Heart right ventricle (tissue), 16 donors: ENCODE measurements at regions of chr15 and their contacts with region 1.

Region 1: DNA sequence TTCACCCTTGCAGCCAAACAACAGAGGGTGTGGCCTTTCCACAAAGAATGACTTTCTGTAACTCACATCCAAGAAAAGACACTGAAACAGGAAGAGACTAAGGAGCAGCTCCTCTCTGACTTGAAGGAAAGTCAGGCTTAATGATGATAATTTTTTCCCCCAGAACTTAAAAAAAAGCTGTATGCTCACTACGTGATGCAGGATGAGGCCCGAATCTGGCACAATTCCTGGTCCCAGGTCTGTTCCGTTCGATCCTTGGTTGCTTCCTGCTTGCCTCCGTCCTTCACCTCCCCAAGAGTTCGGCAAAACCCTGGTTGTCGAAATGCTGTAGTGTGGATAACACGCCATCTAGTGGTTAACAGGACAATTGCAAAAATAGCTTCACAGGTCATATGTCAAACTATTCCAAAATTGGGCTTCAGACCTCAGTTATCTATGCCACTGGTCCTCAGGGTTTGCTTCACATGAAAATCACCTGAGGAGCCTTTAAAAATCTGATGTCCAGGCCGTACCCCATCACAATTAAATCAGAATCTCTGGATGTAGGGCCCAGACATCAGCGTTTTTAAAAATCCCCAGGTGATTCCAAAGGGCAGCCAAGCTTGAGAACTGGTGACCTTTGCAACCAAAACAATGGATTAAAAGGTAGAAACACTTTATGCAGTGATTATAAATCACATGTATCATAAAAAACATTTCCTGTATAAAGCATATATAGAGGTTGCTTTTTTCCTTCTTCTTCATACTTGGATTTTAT is 28.1 kb upstream of the SYNM start:
- DNase-seq: peak in 1 of 2 donors; percentile 73
- ATAC-seq: peak; percentile 84 to 91 (median 87)
- H3K4me3 ChIP-seq: peak overlapping the region in 8 of 10 donors; percentile 11 to 50 (median 44)
- H3K27ac ChIP-seq: peak overlapping the region in 1 of 10 donors; percentile 66
- H3K4me1 ChIP-seq: peaks cover 0 to 9% (median 0%) of the 10 kb centered on the region in 9 donors
- H3K27me3 ChIP-seq: peaks cover 0 to 3% (median 0%) of the 10 kb centered on the region in 7 donors
- CTCF ChIP-seq: peak; percentile 78 to 92 (median 91)

Region 2: DNA sequence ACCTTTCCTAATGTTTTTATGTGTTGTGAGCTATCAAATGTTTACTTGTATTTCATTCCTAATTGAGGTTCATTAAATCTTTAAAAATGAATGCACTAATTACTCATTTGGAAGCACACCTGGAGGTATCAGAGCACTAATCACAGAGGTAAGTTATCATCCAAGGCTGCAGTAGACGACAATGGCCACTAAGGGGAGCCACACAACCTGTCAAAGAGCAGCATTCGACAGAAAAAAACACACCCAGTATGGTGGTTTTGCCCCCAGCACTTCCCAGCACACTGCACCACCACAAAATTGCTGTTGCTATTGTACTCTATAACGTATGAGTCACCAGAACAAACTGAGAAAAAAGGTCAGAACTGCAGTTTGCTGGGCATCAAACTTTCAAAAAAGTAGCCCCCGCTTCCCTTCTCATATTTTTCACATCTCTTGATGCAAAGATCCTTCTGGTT is 634.3 kb before region 1 on chr15:
- intact Hi-C with region 1: loop called in 8 of 10 experiments (anchors 2 to 10 kb)
- DNase-seq: no peak
- ATAC-seq: peak in 1 of 8 donors; percentile 70
- H3K4me3 ChIP-seq: no peak overlapping the region
- H3K27ac ChIP-seq: no peak overlapping the region
- H3K4me1 ChIP-seq: no peaks in the 10 kb centered on the region
- H3K27me3 ChIP-seq: peaks cover 0 to 39% (median 13%) of the 10 kb centered on the region in 7 donors
- CTCF ChIP-seq: peak; percentile 51 to 77 (median 72)

Region 3: GRCh38 chr15:98518823-98519561 is 557.7 kb before region 1 on chr15:
- intact Hi-C with region 1: loop called (anchors 1 to 5 kb)
- DNase-seq: peak in 1 of 2 donors; percentile 59
- ATAC-seq: peak; percentile 77 to 88 (median 82)
- H3K4me3 ChIP-seq: no peak overlapping the region
- H3K27ac ChIP-seq: no peak overlapping the region
- H3K4me1 ChIP-seq: peaks cover 0 to 6% (median 0%) of the 10 kb centered on the region in 9 donors
- H3K27me3 ChIP-seq: peaks cover 0 to 11% (median 0%) of the 10 kb centered on the region in 7 donors
- CTCF ChIP-seq: peak; percentile 76 to 89 (median 79)

Region 4: GRCh38 chr15:98525661-98526001 is 551.1 kb before region 1 on chr15:
- intact Hi-C with region 1: loop called in 1 of 10 experiments (anchors 5 kb)
- DNase-seq: no peak
- ATAC-seq: peak in 1 of 8 donors; percentile 41
- H3K4me3 ChIP-seq: no peak overlapping the region
- H3K27ac ChIP-seq: peak overlapping the region in 1 of 10 donors; percentile 15
- H3K4me1 ChIP-seq: no peaks in the 10 kb centered on the region
- H3K27me3 ChIP-seq: peaks cover 0 to 24% (median 10%) of the 10 kb centered on the region in 7 donors
- CTCF ChIP-seq: no peak

Region 5: GRCh38 chr15:98668566-98669308 is 408.0 kb before region 1 on chr15:
- intact Hi-C with region 1: loop called in 1 of 10 experiments (anchors 10 kb)
- DNase-seq: no peak
- ATAC-seq: peak in 5 of 8 donors; percentile 12 to 31 (median 21)
- H3K4me3 ChIP-seq: no peak overlapping the region
- H3K27ac ChIP-seq: peak overlapping the region in 8 of 10 donors; percentile 21 to 87 (median 72)
- H3K4me1 ChIP-seq: peaks cover 16 to 98% (median 77%) of the 10 kb centered on the region in 9 donors
- H3K27me3 ChIP-seq: no peaks in the 10 kb centered on the region
- CTCF ChIP-seq: no peak

Region 6: GRCh38 chr15:98943601-98944151 is 133.1 kb before region 1 on chr15:
- intact Hi-C with region 1: loop called in 1 of 10 experiments (anchors 10 kb)
- DNase-seq: peak; percentile 48 to 80
- ATAC-seq: peak; percentile 75 to 91 (median 84)
- H3K4me3 ChIP-seq: no peak overlapping the region
- H3K27ac ChIP-seq: peak overlapping the region in 9 of 10 donors; percentile 31 to 85 (median 53)
- H3K4me1 ChIP-seq: peaks cover 2 to 57% (median 28%) of the 10 kb centered on the region in 9 donors
- H3K27me3 ChIP-seq: no peaks in the 10 kb centered on the region
- CTCF ChIP-seq: no peak